ENCODE measurements at regions of chr6 and their contacts with region 1.

Region 1: GRCh38 chr6:111997078-111997852 is 56.6 kb upstream of the CCN6 start:
- DNase-seq: peak; percentile 61 to 92 (median 76)
- ATAC-seq: peak; percentile 70
- H3K4me3 ChIP-seq: peak overlapping the region; percentile 8
- H3K4me3 Mint-ChIP-seq: peak overlapping the region; percentile 75
- H3K27ac ChIP-seq: no peak overlapping the region
- H3K27ac Mint-ChIP-seq: peak overlapping the region; percentile 82
- H3K4me1 ChIP-seq: peaks cover 40% of the 10 kb centered on the region
- H3K4me1 Mint-ChIP-seq: peaks cover 55% of the 10 kb centered on the region
- H3K27me3 ChIP-seq: no peaks in the 10 kb centered on the region
- H3K27me3 Mint-ChIP-seq: no peaks in the 10 kb centered on the region
- CTCF ChIP-seq: peak; percentile 93

Region 2: GRCh38 chr6:111950661-111951496 is 46.4 kb before region 1 on chr6:
- CTCF ChIA-PET with region 1: interaction called, 3 read pairs
- POLR2A ChIA-PET with region 1: no interaction called
- intact Hi-C with region 1: loop called in 1 of 2 experiments (anchors 5 kb)
- DNase-seq: no peak
- ATAC-seq: no peak
- H3K4me3 ChIP-seq: no peak overlapping the region
- H3K4me3 Mint-ChIP-seq: no peak overlapping the region
- H3K27ac ChIP-seq: no peak overlapping the region
- H3K27ac Mint-ChIP-seq: no peak overlapping the region
- H3K4me1 ChIP-seq: no peaks in the 10 kb centered on the region
- H3K4me1 Mint-ChIP-seq: peaks cover 16% of the 10 kb centered on the region
- H3K27me3 ChIP-seq: no peaks in the 10 kb centered on the region
- H3K27me3 Mint-ChIP-seq: no peaks in the 10 kb centered on the region
- CTCF ChIP-seq: no peak

Region 3: DNA sequence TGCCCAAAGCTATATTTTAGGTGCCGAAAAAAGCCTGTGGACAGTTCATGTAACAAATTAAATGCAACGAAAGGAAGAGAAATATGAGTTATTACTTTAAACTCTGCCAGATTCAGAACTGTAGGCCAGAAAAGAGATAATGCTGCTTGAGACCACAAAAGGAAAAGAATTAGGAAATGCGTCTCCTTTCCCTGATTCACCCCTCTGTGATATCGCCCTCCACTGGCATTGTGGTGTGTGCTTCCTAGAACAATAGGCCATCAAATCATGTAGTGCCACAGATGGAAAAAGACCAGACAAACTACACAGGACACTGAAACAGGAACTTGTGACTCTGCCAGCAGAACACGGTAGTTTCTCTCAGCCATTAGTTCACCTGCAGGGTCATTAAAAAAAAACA is 271.8 kb after region 1 on chr6:
- CTCF ChIA-PET with region 1: no interaction called
- POLR2A ChIA-PET with region 1: no interaction called
- intact Hi-C with region 1: no loop called
- DNase-seq: no peak
- ATAC-seq: no peak
- H3K4me3 ChIP-seq: no peak overlapping the region
- H3K4me3 Mint-ChIP-seq: no peak overlapping the region
- H3K27ac ChIP-seq: no peak overlapping the region
- H3K27ac Mint-ChIP-seq: no peak overlapping the region
- H3K4me1 ChIP-seq: no peaks in the 10 kb centered on the region
- H3K4me1 Mint-ChIP-seq: peaks cover 6% of the 10 kb centered on the region
- H3K27me3 ChIP-seq: no peaks in the 10 kb centered on the region
- H3K27me3 Mint-ChIP-seq: no peaks in the 10 kb centered on the region
- CTCF ChIP-seq: no peak